HEK293 (cell line): ENCODE measurements at regions of chr19 and their contacts with region 1.

Region 1: DNA sequence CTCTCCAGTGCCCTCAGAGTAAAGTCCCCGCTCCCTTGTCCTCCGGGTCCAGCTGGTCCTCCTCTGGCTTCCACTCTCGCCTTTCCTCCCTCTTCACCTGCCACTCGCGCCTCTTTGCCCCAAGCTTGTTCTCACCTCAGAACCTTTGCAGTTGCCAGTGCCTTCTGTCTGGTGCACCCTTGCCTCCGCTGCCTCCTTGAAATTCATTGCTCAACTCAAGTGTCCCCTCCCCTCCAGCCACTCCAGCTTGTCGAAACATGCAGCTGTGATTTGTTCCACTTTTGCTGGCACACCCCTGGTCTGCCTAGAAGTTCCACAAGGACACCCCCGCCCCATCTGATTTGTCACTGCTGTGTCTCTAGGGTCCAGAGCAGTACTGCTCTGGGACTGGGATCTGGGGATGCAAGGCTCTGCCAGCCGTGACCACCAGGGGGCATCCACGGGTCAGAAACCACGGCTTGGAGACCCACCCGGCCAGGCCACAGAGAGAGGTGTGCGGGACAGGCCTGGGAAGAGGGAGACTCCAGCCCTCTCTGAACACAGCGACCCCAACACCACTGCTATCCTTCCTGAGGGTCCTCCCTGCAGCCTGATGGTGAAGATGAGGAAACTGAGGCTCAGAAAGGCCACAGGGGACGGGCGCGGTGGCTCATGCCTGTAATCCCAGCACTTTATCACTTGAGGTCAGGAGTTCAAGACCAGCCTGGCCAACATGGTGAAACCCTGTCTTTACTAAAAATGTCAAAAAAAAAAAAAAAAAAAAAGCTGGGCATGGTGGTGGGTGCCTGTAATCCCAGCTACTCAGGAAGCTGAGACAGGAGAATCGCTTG is 49.9 kb downstream of the AP1M1 start:
- H3K4me3 ChIP-seq: no peak overlapping the region
- H3K27ac ChIP-seq: no peak overlapping the region
- H3K4me1 ChIP-seq: no peaks in the 10 kb centered on the region
- CTCF ChIP-seq: peak; percentile 94

Region 2: DNA sequence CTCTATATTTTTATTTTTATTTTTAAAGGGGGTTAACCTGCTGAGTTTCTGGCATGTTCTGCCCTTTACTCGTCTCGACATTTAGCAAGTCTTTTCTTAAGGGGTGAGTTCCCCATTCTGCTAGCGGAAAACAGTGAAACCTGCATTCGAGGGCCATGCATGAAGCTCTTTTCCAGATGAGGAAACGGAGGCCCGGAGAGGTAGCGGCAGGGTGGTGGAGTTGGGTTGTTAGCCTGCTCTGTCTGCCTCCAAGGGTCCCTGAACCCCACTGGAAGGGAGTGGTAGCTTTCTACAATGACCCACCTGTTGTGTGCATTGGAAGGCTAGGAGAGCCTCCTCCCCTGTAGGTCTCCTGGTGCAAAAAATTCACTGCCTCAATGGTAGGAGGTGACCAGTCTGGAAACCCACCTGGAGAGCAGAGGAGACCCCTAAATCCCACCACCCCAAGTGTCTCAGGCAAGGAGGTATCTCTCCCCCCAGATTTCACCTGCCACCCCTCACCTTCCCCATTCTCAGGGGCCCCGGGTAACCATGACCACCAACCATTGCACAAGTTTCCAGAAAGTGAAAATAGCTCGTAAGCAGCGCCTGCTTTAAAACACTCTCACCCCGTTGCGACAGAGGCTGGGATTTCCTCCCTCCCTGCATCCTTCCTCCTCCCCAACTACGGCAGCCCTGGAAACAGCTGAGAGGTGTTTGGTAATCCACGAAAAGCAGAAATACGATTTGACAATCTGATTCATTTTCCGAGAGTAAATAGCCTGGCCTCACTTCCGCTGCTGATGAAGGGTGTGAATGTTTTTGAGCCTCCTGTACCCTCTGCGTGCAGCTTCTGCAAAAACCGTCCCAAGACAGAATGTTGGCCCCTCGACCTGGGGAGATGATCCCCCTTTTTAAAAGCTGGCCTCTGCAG is 80.6 kb after region 1 on chr19:
- CTCF ChIA-PET with region 1: interaction called, 18 read pairs
- POLR2A ChIA-PET with region 1: no interaction called
- H3K4me3 ChIP-seq: no peak overlapping the region
- H3K27ac ChIP-seq: no peak overlapping the region
- H3K4me1 ChIP-seq: no peaks in the 10 kb centered on the region
- CTCF ChIP-seq: no peak

Region 3: DNA sequence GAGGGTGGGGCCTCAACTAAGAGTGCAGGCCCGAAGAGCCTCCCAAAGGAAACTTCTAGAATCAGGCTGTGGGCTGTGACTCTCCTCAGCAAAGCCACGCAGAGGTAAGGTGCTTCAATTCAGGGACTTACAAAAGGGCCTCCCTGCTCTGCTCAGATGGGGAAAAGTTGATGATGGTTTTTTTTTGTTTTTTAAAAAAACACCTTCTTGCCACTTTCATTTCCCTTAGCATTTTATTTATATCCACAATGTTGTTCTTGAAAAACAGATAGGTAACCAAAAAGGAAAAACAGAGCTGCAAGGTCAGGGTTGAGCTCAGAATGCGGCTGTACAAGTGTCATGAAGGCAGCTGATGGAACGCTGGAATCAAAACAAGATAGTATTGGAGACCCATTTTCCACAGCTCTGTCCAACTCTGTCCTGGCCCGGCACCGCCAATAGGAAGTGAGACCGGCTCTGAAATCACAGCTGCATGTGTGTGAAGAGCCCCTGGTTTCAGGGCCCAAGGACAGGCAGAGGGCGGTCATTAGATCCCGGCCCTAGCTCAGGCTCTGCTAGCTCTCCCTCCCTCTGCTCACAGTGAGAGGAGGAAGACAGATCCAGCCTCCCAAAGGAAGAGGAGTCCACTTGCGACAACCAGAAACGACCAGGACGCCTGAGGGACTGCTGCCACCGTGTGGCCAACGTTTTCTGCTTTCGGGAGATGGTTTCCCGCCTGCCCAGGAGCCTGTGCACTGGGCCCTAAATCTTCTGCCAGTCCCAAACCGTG is 135.4 kb after region 1 on chr19:
- CTCF ChIA-PET with region 1: interaction called, 73 read pairs
- POLR2A ChIA-PET with region 1: no interaction called
- H3K4me3 ChIP-seq: no peak overlapping the region
- H3K27ac ChIP-seq: no peak overlapping the region
- H3K4me1 ChIP-seq: no peaks in the 10 kb centered on the region
- CTCF ChIP-seq: peak; percentile 86

Region 4: DNA sequence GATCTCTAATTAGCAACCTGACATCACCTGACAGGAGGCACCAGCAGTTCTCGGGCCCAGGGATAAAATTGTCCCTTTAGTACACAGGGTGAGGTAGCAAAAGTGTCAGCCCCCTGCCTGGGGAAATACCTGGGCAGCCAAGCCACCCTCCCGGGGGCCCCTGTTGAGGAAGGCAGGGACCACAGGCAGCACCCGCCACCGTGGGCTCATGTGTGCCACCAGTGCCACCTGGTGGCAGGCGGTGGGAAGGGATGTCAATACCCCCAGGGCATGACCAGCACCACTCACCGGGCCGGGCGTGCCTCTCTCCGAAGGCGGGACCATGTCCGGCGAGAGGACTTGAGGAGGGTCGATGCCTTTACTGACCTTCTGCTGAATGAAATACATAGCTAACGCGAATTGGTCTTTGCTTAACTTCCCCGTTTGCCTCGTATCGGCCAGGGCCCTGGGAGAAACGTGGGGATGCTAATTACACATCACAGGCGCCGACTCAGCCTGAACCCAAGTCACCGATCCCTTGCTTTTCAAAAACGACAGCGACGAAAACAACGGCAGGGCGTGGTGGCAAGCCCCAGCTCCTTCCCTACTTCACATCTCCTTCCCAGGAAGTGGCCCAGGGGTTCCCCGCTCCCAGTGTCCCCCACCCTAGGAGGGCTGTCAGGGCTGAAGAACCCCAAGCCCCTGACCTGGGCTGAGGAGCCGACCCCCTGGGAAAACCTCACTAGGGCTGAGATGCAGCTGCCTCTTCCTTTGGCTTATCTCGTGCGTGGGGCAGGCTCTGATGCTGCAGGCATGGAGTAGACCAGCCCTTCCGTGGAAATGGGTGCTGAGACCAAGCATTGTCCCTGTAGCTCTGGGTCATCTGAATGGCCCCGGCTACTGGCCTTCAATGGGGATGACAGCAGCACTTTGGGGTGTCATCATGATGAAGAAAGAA is 170.4 kb after region 1 on chr19:
- CTCF ChIA-PET with region 1: interaction called, 42 read pairs
- POLR2A ChIA-PET with region 1: no interaction called
- H3K4me3 ChIP-seq: no peak overlapping the region
- H3K27ac ChIP-seq: no peak overlapping the region
- H3K4me1 ChIP-seq: no peaks in the 10 kb centered on the region
- CTCF ChIP-seq: peak; percentile 85